ENCODE measurements at regions of chr7 and their contacts with region 1.

Region 1: DNA sequence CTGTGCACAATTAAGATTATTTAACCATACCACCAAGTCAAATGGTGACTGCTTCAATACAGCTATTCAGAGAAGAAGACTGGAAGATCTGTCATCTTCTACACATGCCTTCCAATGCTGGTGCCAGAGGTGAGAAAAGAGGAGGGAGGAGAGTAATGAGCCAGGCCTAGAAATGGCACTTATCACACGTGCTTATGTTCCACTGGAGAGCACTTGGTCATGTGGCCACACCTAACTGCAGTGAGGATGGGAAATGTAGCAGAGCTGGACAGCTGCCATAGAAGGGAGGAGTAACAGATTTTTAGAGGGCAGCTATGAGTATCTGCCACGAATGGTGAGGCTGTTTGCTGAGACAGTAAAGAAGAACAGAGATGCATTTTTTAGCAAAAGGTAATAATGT is 77.1 kb downstream of the MPLKIP start:
- DNase-seq: no peak
- ATAC-seq: peak in 2 of 4 donors; percentile 49 to 55
- H3K4me3 ChIP-seq: no peak overlapping the region
- H3K27ac ChIP-seq: no peak overlapping the region
- H3K4me1 ChIP-seq: peaks cover 0 to 3% (median 0%) of the 10 kb centered on the region in 3 donors
- H3K27me3 ChIP-seq: no peaks in the 10 kb centered on the region
- CTCF ChIP-seq: no peak

Region 2: DNA sequence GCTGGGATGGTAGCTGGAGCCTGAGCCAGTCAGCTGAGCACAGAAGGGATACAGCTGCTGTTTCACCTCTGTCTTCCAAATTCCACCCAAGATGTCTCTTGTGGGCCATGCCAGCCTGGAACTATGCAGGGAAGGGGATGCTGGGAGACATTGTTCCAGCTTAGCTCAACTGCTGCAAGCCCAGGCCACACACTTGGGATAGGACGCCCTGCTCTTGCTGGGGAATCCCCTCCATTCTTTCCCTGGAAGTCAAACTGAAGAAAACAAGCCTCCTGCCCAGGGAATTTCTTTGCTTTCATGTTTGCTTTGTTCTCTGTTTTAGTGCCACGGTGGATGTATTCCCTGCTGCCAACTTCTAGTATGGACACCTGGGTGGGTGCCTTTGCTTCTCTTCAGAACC is 162.4 kb before region 1 on chr7:
- intact Hi-C with region 1: loop called in 2 of 3 experiments (anchors 10 kb)
- DNase-seq: no peak
- ATAC-seq: peak in 1 of 4 donors; percentile 61
- H3K4me3 ChIP-seq: no peak overlapping the region
- H3K27ac ChIP-seq: no peak overlapping the region
- H3K4me1 ChIP-seq: no peaks in the 10 kb centered on the region
- H3K27me3 ChIP-seq: no peaks in the 10 kb centered on the region
- CTCF ChIP-seq: no peak

Region 3: DNA sequence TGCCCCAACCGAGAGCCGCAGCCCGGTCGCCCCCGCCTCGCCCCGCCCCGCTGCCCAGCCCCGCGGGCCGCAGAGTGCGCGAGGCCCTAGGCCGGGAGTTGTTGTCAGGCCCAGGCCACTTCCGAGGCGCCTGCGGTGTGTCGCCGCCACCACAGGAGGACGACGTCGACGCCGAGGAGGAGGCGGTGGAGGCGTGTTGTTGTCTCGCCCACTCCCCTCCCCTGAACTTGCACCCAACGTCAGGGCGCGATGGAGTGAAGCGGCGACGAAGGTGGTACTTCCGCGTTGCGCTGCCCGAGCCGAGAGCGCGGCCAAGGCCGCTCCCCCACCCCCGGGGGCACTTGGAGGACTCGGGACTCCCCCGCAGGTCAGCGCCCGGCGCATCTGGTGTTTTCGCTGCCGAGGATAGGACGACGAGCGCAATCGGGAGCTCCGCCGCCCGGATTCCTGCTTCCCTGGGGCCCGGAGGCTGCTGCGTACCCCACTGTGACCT is 107.3 kb before region 1 on chr7 and contains the start of gene CDK13:
- intact Hi-C with region 1: loop called in 1 of 3 experiments (anchors 5 kb)
- DNase-seq: peak in 5 of 6 donors; percentile 75 to 86 (median 80)
- ATAC-seq: peak; percentile 49 to 64 (median 53)
- H3K4me3 ChIP-seq: peak within 1 kb of the TSS; percentile 89 to 95 (median 92)
- H3K27ac ChIP-seq: peak within 1 kb of the TSS; percentile 98 to 99 (median 99)
- H3K4me1 ChIP-seq: peaks cover 12 to 17% (median 16%) of the 10 kb centered on the region in 3 donors
- H3K27me3 ChIP-seq: no peaks in the 10 kb centered on the region
- CTCF ChIP-seq: no peak
- total RNA-seq, gene CDK13: 20.7 to 34.7 (median 23.5) TPM

Region 4: DNA sequence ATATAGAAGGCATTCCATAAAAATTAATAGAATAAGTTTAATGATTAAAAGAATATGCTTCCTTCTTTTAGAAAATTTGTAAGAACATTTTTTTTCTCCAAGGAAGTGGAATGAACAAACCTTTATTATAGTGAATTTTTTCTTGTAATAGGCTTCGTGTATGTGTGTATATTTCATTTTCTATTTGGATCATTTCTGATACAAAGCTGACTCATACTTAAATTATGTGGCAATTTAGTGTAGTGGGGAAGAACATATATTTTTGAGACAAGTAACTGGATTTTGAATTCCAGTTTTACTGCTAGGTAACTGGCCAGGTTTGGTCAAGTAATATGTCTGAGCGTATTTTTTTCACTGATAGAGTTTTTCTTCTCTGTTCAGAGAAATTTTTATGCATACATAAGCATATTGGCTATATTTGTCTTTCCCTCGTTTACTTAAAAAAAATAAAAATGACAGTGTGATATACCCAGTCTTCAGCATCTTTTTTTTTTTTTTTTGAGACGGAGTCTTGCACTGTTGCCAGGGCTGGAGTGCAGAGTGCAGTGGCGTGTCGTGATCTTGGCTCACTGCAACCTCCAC is 56.5 kb before region 1 on chr7:
- intact Hi-C with region 1: no loop called
- DNase-seq: no peak
- ATAC-seq: no peak
- H3K4me3 ChIP-seq: no peak overlapping the region
- H3K27ac ChIP-seq: no peak overlapping the region
- H3K4me1 ChIP-seq: no peaks in the 10 kb centered on the region
- H3K27me3 ChIP-seq: no peaks in the 10 kb centered on the region
- CTCF ChIP-seq: no peak

Region 5: GRCh38 chr7:40072268-40072667 is 15.0 kb after region 1 on chr7:
- intact Hi-C with region 1: no loop called
- DNase-seq: no peak
- ATAC-seq: no peak
- H3K4me3 ChIP-seq: no peak overlapping the region
- H3K27ac ChIP-seq: no peak overlapping the region
- H3K4me1 ChIP-seq: no peaks in the 10 kb centered on the region
- H3K27me3 ChIP-seq: no peaks in the 10 kb centered on the region
- CTCF ChIP-seq: no peak

Region 6: DNA sequence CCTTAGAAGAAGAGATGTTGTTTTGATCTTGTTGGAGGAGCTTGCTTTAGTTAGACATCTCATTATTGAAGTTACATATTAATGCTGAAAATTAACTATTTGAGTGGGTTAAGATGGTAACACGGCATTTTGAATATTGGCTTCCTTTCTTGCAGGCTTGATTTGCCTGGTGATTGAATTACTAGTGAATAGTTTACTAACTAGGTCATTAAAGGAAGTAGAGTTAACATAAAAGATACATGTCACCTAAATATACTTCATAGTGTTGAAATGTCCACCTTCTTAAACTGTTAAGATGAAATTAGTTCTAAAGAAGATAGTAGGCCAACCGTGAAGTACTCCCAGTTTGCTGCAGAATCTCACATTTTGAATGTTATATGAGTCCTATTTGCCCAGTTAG is 58.6 kb after region 1 on chr7:
- intact Hi-C with region 1: no loop called
- DNase-seq: no peak
- ATAC-seq: no peak
- H3K4me3 ChIP-seq: no peak overlapping the region
- H3K27ac ChIP-seq: no peak overlapping the region
- H3K4me1 ChIP-seq: no peaks in the 10 kb centered on the region
- H3K27me3 ChIP-seq: no peaks in the 10 kb centered on the region
- CTCF ChIP-seq: no peak

Measured in pancreas (tissue), 10 donors.